GM12878 (cell line): ENCODE measurements at regions of chr5 and their contacts with region 1.

Region 1: GRCh38 chr5:66180282-66181155 is 36.4 kb downstream of the SREK1 start:
- DNase-seq: no peak
- ATAC-seq: no peak
- H3K4me3 ChIP-seq: no peak overlapping the region
- H3K27ac ChIP-seq: no peak overlapping the region
- H3K4me1 ChIP-seq: no peaks in the 10 kb centered on the region
- H3K27me3 ChIP-seq: no peaks in the 10 kb centered on the region
- CTCF ChIP-seq: no peak
- EP300 ChIP-seq: no peak
- POLR2A ChIP-seq: no peak
- RAD21 ChIP-seq: no peak

Region 2: GRCh38 chr5:66193419-66193818 is 12.9 kb after region 1 on chr5:
- CTCF ChIA-PET with region 1: interaction called, 11 read pairs
- POLR2A ChIA-PET with region 1: no interaction called
- RAD21 ChIA-PET with region 1: no interaction called
- SMC1A ChIA-PET with region 1: interaction called, 3 read pairs
- in situ Hi-C with region 1: no loop called
- intact Hi-C with region 1: no loop called
- DNase-seq: no peak
- ATAC-seq: no peak
- H3K4me3 ChIP-seq: no peak overlapping the region
- H3K27ac ChIP-seq: no peak overlapping the region
- H3K4me1 ChIP-seq: no peaks in the 10 kb centered on the region
- H3K27me3 ChIP-seq: no peaks in the 10 kb centered on the region
- CTCF ChIP-seq: no peak
- EP300 ChIP-seq: no peak
- POLR2A ChIP-seq: no peak
- RAD21 ChIP-seq: no peak

Region 3: DNA sequence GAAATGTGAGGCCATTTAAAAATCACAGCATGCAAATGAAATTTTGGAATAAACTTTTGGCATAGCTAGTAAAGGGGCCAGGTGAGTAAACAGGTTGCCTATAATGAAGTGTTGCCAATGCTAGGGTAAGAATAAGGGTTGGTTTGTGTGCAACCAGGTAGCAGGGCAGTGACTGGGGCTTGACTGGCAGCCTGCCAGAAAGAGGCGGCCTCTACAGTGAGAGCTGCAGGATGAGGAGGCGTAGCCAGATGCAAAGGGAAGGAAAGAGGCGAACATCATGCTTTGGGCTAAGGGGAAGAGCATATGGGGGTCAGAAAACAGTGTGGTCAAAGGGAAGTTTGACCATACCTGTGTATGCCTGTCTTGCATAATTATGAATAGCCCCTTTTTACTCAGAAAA is 486.3 kb after region 1 on chr5:
- CTCF ChIA-PET with region 1: no interaction called
- POLR2A ChIA-PET with region 1: no interaction called
- RAD21 ChIA-PET with region 1: no interaction called
- SMC1A ChIA-PET with region 1: no interaction called
- in situ Hi-C with region 1: no loop called
- intact Hi-C with region 1: no loop called
- DNase-seq: no peak
- ATAC-seq: no peak
- H3K4me3 ChIP-seq: no peak overlapping the region
- H3K27ac ChIP-seq: no peak overlapping the region
- H3K4me1 ChIP-seq: no peaks in the 10 kb centered on the region
- H3K27me3 ChIP-seq: no peaks in the 10 kb centered on the region; a peak in 2 of 4 replicates
- CTCF ChIP-seq: no peak
- EP300 ChIP-seq: no peak
- POLR2A ChIP-seq: no peak
- RAD21 ChIP-seq: no peak